ENCODE measurements at regions of chr11 and their contacts with region 1.

Region 1: DNA sequence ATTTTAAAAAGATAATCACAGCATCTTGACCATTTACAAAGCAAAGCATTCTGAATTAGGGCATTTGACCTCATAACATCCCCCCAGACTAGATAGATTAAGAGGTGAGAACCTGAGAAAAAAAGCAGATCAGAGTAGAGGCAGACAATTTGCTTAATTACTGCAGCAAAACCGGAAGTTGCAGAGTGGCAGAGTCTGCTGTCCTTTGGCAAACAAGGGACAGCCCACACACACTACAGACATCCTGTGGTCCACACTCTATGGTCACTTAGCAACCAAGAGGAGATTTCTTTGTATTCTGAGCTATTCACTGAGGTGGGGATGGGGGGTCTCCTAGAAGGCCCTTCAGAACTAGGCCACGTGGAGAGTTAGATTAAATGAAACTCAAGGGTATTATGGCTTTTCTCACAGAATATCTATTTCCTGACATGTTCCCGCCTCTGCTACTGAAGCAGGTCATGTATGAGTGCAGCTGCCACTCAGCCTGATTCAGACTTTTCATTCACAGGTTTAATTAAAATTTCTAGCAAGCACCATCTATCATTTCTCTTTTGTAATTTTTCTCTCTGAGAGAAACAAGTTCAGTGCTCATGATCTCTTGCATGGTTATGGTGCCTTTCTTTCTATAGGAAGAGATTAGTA is 48.5 kb downstream of the SVIP start:
- DNase-seq: no peak
- H3K4me3 ChIP-seq: no peak overlapping the region
- H3K27ac ChIP-seq: no peak overlapping the region
- H3K4me1 ChIP-seq: no peaks in the 10 kb centered on the region
- H3K27me3 ChIP-seq: no peaks in the 10 kb centered on the region
- CTCF ChIP-seq: no peak
- POLR2A ChIP-seq: no peak

Region 2: GRCh38 chr11:22331771-22332170 is 449.3 kb before region 1 on chr11:
- intact Hi-C with region 1: loop called in 1 of 2 experiments (anchors 5 kb)
- DNase-seq: no peak
- H3K4me3 ChIP-seq: no peak overlapping the region
- H3K27ac ChIP-seq: no peak overlapping the region
- H3K4me1 ChIP-seq: no peaks in the 10 kb centered on the region
- H3K27me3 ChIP-seq: peaks cover 5% of the 10 kb centered on the region
- CTCF ChIP-seq: no peak
- POLR2A ChIP-seq: no peak

Region 3: DNA sequence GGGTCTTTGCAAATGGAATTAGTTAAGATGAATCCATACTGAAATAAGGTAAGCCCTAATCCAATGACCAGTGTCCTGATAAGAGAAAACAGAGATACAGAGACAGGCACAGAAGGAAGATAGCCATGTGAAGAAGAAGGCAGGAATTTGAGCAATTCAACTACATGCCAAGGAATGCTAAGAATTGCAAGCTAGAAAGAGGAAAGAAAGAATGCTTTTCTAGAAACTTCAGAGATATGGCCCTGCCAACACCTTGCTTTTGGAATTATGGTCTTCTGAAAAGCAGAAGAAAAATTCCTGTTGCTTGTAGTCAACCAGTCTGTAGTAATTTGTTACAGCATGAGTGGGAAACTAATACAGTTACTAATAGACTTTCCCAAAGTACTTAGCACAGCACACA is 331.6 kb before region 1 on chr11:
- intact Hi-C with region 1: no loop called
- DNase-seq: no peak
- H3K4me3 ChIP-seq: no peak overlapping the region
- H3K27ac ChIP-seq: no peak overlapping the region
- H3K4me1 ChIP-seq: no peaks in the 10 kb centered on the region
- H3K27me3 ChIP-seq: no peaks in the 10 kb centered on the region
- CTCF ChIP-seq: no peak
- POLR2A ChIP-seq: no peak